ENCODE measurements at regions of chr15 and their contacts with region 1.

Region 1: DNA sequence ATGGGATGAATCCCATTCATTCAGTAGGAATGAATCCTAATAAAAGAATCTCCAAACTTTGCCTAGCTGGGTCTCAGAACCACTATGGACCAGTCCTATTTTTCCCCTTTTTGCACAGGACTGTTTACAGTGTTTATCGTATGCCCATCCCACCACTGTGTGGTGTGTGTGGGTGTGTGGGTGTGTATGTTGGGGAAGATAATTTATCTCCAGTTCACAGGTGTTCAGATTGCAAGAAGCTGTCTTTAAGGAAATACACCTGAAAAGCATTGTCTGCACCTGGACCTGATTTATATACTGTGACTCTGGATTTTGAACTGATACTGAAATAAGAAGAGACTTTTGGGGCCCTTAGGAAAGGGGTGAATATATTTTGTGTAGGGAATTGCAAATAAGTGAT is 24.7 kb upstream of the SHF start:
- DNase-seq: no peak
- ATAC-seq: no peak
- H3K4me3 ChIP-seq: no peak overlapping the region
- H3K27ac ChIP-seq: no peak overlapping the region
- H3K4me1 ChIP-seq: no peaks in the 10 kb centered on the region
- H3K27me3 ChIP-seq: peaks cover 0 to 4% (median 0%) of the 10 kb centered on the region in 7 donors
- CTCF ChIP-seq: no peak

Region 2: GRCh38 chr15:45268135-45268534 is 55.6 kb after region 1 on chr15:
- intact Hi-C with region 1: loop called in 4 of 10 experiments (anchors 5 kb)
- DNase-seq: no peak
- ATAC-seq: no peak
- H3K4me3 ChIP-seq: no peak overlapping the region
- H3K27ac ChIP-seq: no peak overlapping the region
- H3K4me1 ChIP-seq: no peaks in the 10 kb centered on the region
- H3K27me3 ChIP-seq: no peaks in the 10 kb centered on the region
- CTCF ChIP-seq: no peak